ENCODE measurements at regions of chr6 and their contacts with region 1.

Region 1: DNA sequence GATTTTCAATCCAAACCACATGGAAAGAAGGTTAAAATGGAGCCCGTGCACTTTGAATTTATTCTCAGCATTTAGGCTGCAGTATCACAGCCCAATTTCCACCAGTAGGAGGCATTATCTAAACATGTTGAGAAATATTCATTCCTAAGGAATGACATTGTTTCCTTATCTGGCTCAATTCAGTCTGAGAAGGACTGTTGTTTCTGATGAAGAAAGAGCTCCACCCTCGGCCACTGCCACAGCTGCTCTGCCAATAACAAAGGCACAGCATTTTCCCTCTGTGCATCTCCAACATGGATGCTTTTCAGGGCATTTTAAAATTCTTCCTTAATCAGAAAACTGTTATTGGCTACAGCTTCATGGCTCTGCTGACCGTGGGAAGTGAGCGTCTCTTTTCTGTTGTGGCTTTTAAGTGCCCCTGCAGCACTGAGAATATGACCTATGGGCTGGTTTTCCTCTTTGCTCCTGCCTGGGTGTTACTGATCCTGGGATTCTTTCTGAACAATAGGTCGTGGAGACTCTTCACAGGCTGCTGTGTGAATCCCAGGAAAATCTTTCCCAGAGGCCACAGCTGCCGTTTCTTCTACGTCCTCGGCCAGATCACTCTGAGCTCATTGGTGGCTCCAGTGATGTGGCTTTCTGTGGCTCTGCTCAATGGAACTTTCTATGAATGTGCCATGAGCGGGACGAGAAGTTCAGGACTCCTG is at the start of gene CALHM5:
- DNase-seq: no peak
- ATAC-seq: peak; percentile 90
- H3K4me3 Mint-ChIP-seq: no peak within 1 kb of the TSS
- H3K27ac Mint-ChIP-seq: peak within 1 kb of the TSS; percentile 81
- H3K4me1 Mint-ChIP-seq: peaks cover 18% of the 10 kb centered on the region
- H3K27me3 Mint-ChIP-seq: no peaks in the 10 kb centered on the region
- CTCF ChIP-seq: peak; percentile 26; the same call in 1 of the 2 replicates
- total RNA-seq, gene CALHM5: 0.07 to 0.11 TPM (median 0.09 TPM) in 3 replicates

Region 2: DNA sequence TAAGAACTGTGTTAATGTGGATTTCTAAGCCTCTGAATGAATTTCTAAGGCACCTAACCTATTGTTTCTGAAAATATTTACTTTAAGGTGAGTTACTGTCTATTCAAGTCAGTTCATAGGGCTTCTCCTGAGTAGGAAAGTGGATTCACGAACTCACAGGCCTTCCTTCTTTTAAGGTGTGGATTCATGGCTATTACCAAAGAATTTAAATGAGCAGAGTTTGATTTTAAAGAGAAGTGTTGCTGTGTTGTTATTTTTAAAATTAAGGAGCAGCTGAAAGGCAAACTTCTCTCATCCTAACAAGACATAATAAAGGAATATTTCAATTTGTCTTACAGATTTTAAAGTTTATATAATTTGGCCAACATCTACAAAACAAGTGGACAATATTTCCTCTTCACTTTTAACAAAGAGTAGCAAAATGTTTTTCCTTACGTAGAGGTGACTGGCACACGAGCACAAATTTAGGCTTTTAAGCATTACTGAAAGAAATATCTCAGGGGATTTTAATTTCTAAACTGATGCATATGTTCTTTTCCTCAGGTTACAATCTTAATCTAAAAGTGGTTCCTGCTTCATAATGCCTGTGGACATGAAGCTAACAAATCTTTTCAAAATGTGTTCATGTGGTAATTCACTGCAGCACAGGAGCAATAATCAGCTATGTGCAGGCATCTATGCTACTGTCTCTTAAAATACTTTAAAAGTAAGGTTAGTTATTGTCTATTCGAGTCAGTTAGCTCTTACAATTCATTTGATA is 257.1 kb before region 1 on chr6:
- CTCF ChIA-PET with region 1: no interaction called
- POLR2A ChIA-PET with region 1: no interaction called
- DNase-seq: no peak
- ATAC-seq: no peak
- H3K4me3 Mint-ChIP-seq: no peak overlapping the region
- H3K27ac Mint-ChIP-seq: no peak overlapping the region
- H3K4me1 Mint-ChIP-seq: peaks cover 27% of the 10 kb centered on the region; the same call in 1 of the 2 replicates
- H3K27me3 Mint-ChIP-seq: no peaks in the 10 kb centered on the region
- CTCF ChIP-seq: no peak

Region 3: DNA sequence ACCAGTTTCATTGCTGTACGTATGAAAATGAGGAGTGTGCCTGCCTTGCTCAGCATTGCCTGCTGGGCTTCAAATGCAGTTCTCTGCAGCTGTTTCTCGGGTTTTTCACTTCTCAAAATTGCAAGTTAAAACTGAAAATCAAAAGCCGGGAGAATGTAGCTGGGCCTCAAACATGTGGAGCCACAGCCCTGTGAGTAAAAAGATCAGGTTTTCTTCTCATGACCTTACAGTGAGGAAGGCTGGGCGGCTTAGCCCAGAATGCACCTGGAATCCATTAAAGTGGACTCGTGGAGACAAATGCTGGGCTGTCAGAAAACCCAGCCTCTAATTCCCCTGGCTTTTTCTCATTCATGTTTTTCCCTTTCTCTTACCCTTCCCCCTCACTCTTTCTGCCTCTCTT is 106.4 kb before region 1 on chr6:
- CTCF ChIA-PET with region 1: no interaction called
- POLR2A ChIA-PET with region 1: no interaction called
- DNase-seq: no peak
- ATAC-seq: peak; percentile 45
- H3K4me3 Mint-ChIP-seq: peak overlapping the region; percentile 14
- H3K27ac Mint-ChIP-seq: peak overlapping the region; percentile 90
- H3K4me1 Mint-ChIP-seq: peaks cover 54% of the 10 kb centered on the region
- H3K27me3 Mint-ChIP-seq: no peaks in the 10 kb centered on the region
- CTCF ChIP-seq: no peak

Region 4: GRCh38 chr6:116500969-116501433 is 10.6 kb before region 1 on chr6:
- CTCF ChIA-PET with region 1: interaction called, 16 read pairs
- POLR2A ChIA-PET with region 1: no interaction called
- DNase-seq: peak; percentile 20
- ATAC-seq: peak; percentile 71
- H3K4me3 Mint-ChIP-seq: no peak overlapping the region
- H3K27ac Mint-ChIP-seq: no peak overlapping the region
- H3K4me1 Mint-ChIP-seq: peaks cover 7% of the 10 kb centered on the region
- H3K27me3 Mint-ChIP-seq: peaks cover 6% of the 10 kb centered on the region
- CTCF ChIP-seq: no peak

Region 5: DNA sequence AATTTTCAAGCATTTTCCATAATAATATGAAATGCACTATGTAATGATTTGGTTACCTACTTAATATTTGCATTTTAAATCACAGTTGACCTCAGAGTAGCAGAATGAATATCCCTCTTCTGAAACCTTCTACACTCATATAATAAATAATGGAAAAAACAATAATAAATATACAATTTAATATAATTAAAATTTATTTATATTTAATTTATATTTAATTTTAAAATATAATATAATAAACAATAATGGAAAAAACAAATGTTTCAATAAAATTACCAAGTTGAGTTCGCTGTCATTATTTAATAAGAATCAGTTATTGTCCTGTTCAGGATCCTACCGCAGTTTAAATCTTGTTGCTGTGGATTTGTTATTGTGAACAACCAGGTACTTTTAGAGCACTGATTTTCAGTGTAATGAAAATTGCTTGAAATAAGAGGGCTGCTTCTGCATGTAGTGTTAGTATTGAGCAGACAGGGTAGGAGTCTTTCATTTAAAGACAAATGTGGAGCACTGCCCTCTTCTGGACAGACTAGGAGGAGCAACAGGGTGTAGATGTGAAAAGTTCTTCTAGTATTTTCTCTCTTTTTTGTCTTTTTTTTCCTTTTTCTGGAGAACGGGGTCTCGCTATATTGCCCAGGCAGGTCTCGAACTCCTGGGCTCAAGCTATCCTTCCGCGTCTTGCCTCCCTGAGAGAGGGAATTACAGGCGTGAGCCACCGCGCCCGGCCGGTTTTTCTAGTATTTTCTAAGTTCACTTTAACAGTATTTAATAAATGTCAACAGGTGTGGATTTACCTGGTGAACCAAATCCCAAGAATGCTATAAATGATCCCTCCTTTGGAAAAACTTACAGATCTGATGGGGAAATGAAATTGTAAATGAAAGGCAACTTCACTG is 20.4 kb after region 1 on chr6:
- CTCF ChIA-PET with region 1: interaction called, 29 read pairs
- POLR2A ChIA-PET with region 1: no interaction called
- DNase-seq: peak; percentile 79
- ATAC-seq: peak; percentile 75
- H3K4me3 Mint-ChIP-seq: no peak overlapping the region
- H3K27ac Mint-ChIP-seq: no peak overlapping the region
- H3K4me1 Mint-ChIP-seq: peaks cover 49% of the 10 kb centered on the region
- H3K27me3 Mint-ChIP-seq: no peaks in the 10 kb centered on the region
- CTCF ChIP-seq: peak; percentile 55

Region 6: DNA sequence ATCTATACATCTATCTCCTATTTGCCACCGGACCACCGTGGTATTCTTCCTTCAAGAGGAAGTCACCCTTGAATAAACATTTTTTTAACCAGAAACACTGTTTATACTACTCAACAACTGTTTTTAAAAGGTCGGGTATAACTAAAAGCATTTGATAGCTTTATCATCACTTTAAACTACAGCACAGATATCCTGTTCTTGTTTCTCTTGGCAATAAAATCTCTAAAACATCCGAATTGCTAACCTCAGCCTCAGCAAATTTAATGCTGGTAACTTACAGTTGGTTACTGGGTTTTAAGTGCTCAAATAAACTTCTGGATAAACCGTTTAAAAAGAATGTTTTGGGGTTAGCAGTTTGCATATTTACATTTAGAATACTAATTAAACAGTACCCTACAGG is 136.6 kb after region 1 on chr6:
- CTCF ChIA-PET with region 1: no interaction called
- POLR2A ChIA-PET with region 1: no interaction called
- DNase-seq: no peak
- ATAC-seq: no peak
- H3K4me3 Mint-ChIP-seq: no peak overlapping the region
- H3K27ac Mint-ChIP-seq: no peak overlapping the region
- H3K4me1 Mint-ChIP-seq: no peaks in the 10 kb centered on the region
- H3K27me3 Mint-ChIP-seq: no peaks in the 10 kb centered on the region
- CTCF ChIP-seq: no peak

Measured in WTC11 (cell line).